CD8-positive, alpha-beta T cell (primary cell): ENCODE measurements at regions of chr2 and their contacts with region 1.

Region 1: DNA sequence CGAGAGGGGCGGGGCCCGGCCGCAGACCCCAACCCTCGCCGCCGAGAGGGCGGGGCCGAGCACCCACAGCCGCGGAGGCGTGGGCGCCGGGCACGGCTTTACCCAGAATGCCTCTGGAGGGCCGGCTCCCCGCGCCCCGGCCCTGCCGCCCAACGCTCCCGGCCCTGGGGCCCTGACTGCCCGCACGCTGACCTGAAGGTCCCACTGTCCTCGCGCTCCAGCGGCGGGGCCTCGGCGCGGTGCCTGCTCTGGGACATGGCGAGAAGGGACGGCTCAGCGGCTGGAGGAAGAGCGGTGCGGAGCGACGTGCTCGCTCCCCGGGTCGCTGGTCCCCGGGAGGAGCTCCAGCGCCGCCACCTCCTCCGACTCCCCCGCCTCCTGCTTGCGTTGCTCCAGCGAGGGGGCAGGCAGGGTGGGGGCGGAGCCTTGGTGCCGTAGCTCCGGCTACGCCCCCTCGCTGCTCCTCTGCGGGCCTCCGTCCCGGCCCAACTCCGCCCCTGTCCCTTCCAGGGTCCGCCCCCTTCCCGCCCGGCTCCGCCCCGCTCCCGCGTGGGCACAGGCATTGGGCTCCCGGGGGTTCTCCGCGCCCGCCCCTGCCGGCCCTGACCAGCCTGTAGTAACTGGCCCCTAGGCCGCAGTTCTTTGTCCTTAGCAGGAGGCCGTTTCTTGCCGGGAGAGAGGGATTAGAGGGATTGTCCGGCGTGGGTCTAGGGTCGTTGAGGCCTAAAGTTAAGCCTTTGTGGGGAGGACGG is at the starts of genes PJVK and PRKRA:
- DNase-seq: peak; percentile 89 to 98 (median 95)
- ATAC-seq: peak; percentile 92
- H3K4me3 ChIP-seq: peak within 1 kb of the TSS; percentile 73 to 93
- H3K4me3 Mint-ChIP-seq: peak within 1 kb of the TSS; percentile 90
- H3K27ac ChIP-seq: peak within 1 kb of the TSS; percentile 76 to 90
- H3K27ac Mint-ChIP-seq: peak within 1 kb of the TSS; percentile 95
- H3K4me1 ChIP-seq: peaks cover 19% of the 10 kb centered on the region
- H3K4me1 Mint-ChIP-seq: peaks cover 34% of the 10 kb centered on the region
- H3K27me3 ChIP-seq: no peaks in the 10 kb centered on the region
- H3K27me3 Mint-ChIP-seq: no peaks in the 10 kb centered on the region
- CTCF ChIP-seq: no peak
- total RNA-seq, gene PJVK: 2.9 to 5.3 TPM
- total RNA-seq, gene PRKRA: 116 to 127 TPM

Region 2: DNA sequence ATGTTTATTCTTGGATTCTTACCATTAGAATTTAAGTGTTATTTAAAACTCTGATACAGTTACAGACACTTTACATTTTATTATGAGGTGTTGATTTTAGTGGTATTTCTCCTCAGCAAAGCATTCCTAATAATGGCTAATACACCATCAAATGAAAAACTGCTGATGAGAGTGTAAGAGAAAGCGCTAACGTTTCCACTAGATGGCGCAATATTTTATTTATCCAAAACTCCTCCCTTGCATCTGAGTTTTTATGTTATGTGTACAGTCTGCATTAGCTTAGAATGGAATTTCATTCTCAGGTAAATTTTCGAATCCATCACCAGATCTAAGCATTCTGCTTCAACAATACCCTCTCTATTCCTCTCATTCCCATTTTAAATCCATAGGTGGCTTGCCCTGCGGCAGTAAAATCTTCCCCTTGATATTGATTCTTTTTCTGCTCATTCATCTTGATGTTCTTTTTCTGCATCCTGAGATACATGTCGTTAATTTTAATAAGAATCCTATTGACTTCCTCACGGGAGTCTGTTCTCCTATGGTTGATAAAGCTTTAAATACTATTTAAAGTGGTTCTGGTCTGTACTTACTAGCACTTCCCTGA is 53.8 kb before region 1 on chr2:
- CTCF ChIA-PET with region 1: no interaction called
- POLR2A ChIA-PET with region 1: no interaction called
- intact Hi-C with region 1: loop called in 1 of 2 experiments (anchors 5 kb)
- DNase-seq: peak in 2 of 9 experiments; percentile 55 to 67
- ATAC-seq: peak; percentile 62
- H3K4me3 ChIP-seq: no peak overlapping the region
- H3K4me3 Mint-ChIP-seq: no peak overlapping the region
- H3K27ac ChIP-seq: no peak overlapping the region
- H3K27ac Mint-ChIP-seq: no peak overlapping the region
- H3K4me1 ChIP-seq: no peaks in the 10 kb centered on the region
- H3K4me1 Mint-ChIP-seq: no peaks in the 10 kb centered on the region
- H3K27me3 ChIP-seq: no peaks in the 10 kb centered on the region
- H3K27me3 Mint-ChIP-seq: peaks cover 7% of the 10 kb centered on the region
- CTCF ChIP-seq: peak; percentile 84

Region 3: GRCh38 chr2:178478439-178479274 is 27.7 kb after region 1 on chr2 and contains the start of gene FKBP7:
- CTCF ChIA-PET with region 1: interaction called, 10 read pairs
- POLR2A ChIA-PET with region 1: interaction called, 32 read pairs
- intact Hi-C with region 1: loop called (anchors 1 kb)
- DNase-seq: peak; percentile 79 to 95 (median 86)
- ATAC-seq: peak; percentile 82
- H3K4me3 ChIP-seq: peak within 1 kb of the TSS; percentile 84 to 88
- H3K4me3 Mint-ChIP-seq: peak within 1 kb of the TSS; percentile 98
- H3K27ac ChIP-seq: peak within 1 kb of the TSS; percentile 92 to 93
- H3K27ac Mint-ChIP-seq: peak within 1 kb of the TSS; percentile 99
- H3K4me1 ChIP-seq: peaks cover 39% of the 10 kb centered on the region
- H3K4me1 Mint-ChIP-seq: peaks cover 51% of the 10 kb centered on the region
- H3K27me3 ChIP-seq: no peaks in the 10 kb centered on the region
- H3K27me3 Mint-ChIP-seq: no peaks in the 10 kb centered on the region
- CTCF ChIP-seq: peak; percentile 87
- total RNA-seq, gene FKBP7: 0.69 to 0.79 TPM